ENCODE measurements at regions of chr7 and their contacts with region 1.

Region 1: GRCh38 chr7:137626469-137627067 is 220.2 kb downstream of the DGKI start:
- DNase-seq: peak in 2 of 9 donors; percentile 10 to 34
- ATAC-seq: no peak
- H3K4me3 ChIP-seq: no peak overlapping the region
- H3K4me3 Mint-ChIP-seq: no peak overlapping the region
- H3K27ac ChIP-seq: no peak overlapping the region
- H3K27ac Mint-ChIP-seq: peak overlapping the region in 1 of 9 donors; percentile 56
- H3K4me1 ChIP-seq: no peaks in the 10 kb centered on the region
- H3K4me1 Mint-ChIP-seq: peaks cover 0 to 4% (median 0%) of the 10 kb centered on the region in 7 donors
- H3K27me3 ChIP-seq: no peaks in the 10 kb centered on the region
- H3K27me3 Mint-ChIP-seq: peaks cover 9 to 23% (median 18%) of the 10 kb centered on the region in 5 donors

Region 2: GRCh38 chr7:137606061-137606674 is 20.4 kb before region 1 on chr7:
- CTCF ChIA-PET with region 1: no interaction called
- POLR2A ChIA-PET with region 1: no interaction called
- intact Hi-C with region 1: loop called in 1 of 2 experiments (anchors 1 kb)
- DNase-seq: peak in 4 of 9 donors; percentile 3 to 14 (median 6)
- ATAC-seq: no peak
- H3K4me3 ChIP-seq: no peak overlapping the region
- H3K4me3 Mint-ChIP-seq: no peak overlapping the region
- H3K27ac ChIP-seq: no peak overlapping the region
- H3K27ac Mint-ChIP-seq: no peak overlapping the region
- H3K4me1 ChIP-seq: no peaks in the 10 kb centered on the region
- H3K4me1 Mint-ChIP-seq: no peaks in the 10 kb centered on the region
- H3K27me3 ChIP-seq: peaks cover 0 to 3% of the 10 kb centered on the region in 2 donors
- H3K27me3 Mint-ChIP-seq: peaks cover 3 to 27% (median 25%) of the 10 kb centered on the region in 5 donors

Measured in naive thymus-derived CD4-positive, alpha-beta T cell (primary cell).